Left cardiac atrium (tissue), 4 donors: ENCODE measurements at regions of chr4 and their contacts with region 1.

Region 1: DNA sequence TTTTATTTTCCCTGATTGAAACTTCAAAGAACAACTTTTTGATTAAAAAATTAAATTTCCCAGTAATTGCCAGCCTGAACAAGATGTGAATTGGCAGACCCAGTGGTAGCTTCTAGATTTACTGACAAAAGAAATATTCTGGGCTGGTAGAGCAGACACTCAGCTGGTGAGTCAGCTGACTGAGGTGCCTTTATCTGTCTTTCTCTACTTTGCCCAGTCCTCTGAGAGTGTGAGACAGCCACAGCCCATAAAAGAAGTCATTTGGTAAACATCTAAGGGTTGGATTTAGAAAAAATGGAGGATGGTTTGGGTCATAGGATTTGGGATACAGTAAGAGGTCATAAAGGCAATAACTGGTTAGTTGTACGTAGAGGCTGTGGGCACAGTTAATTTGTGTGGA is 54.5 kb downstream of the CCSER1 start:
- DNase-seq: no peak
- ATAC-seq: peak in 1 of 2 donors; percentile 66

Region 2: GRCh38 chr4:89860971-89861370 is 320.7 kb before region 1 on chr4:
- intact Hi-C with region 1: no loop called
- DNase-seq: no peak
- ATAC-seq: no peak

Region 3: GRCh38 chr4:90246816-90247215 is 65.2 kb after region 1 on chr4:
- intact Hi-C with region 1: loop called in 1 of 2 experiments (anchors 10 kb)
- DNase-seq: no peak
- ATAC-seq: no peak

Region 4: DNA sequence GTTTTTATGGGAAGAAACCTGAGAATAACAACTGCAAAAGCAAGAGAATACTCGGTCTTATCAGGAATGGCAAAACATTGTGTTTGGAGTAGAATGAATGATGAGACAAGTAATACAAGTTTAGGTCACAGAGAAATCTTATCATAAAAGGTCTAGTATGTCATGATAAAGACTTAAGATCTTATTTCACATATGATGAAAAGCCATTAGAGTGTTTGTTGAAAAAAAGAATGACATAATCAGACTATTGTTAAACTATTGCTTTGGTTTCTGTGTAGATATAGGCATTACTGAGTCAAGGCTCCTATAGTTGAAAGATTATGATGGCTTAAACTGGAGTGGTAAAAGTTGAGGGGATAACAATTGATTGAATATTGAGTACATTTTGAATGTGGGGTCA is 549.1 kb after region 1 on chr4:
- intact Hi-C with region 1: no loop called
- DNase-seq: no peak
- ATAC-seq: no peak